Psoas muscle (tissue), 8 donors: ENCODE measurements at regions of chr7 and their contacts with region 1.

Region 1: DNA sequence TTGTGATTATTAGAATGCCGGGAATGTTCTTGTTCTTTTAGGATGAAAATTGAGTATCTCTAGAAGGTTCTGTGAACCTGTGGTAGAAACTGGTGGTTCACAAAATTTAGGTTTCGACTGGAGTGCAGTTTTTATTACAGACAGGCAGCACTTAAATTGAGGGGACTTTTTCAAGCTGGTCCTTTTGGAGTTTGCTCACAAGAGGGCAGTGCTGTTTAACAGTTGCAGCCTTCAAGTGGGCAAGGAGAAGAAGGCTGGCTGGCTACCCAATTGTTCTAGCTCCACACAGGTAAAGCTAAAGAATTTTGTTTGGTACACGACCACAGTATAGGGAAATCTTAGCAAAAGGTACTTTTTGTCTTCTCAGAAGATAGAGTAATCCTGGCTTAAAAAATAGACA is 233.6 kb downstream of the SNX13 start:
- DNase-seq: no peak
- ATAC-seq: peak in 3 of 4 donors; percentile 58 to 62 (median 59)
- H3K4me3 ChIP-seq: no peak overlapping the region
- H3K27ac ChIP-seq: no peak overlapping the region
- H3K4me1 ChIP-seq: no peaks in the 10 kb centered on the region
- H3K27me3 ChIP-seq: no peaks in the 10 kb centered on the region
- CTCF ChIP-seq: peak; percentile 55

Region 2: DNA sequence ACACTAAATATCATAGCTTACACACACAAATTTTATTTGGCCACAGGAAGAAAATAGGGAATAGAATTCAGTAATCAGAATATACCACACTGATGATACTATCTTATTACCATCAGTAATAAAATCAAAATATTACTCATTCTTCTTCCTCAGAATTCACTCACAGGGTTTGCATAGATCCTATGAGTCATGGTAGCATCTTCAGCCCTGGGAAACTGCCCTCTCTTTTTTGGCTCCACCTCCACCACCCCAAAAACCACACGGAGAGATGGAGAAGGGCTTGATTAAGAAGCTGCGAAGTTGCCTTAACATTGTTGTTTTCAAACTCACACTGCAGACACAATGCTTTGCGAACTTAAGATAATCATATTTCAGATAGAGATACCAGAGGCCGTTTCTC is 562.4 kb before region 1 on chr7:
- intact Hi-C with region 1: no loop called
- DNase-seq: no peak
- ATAC-seq: no peak
- H3K4me3 ChIP-seq: no peak overlapping the region
- H3K27ac ChIP-seq: no peak overlapping the region
- H3K4me1 ChIP-seq: peaks cover 3% of the 10 kb centered on the region
- H3K27me3 ChIP-seq: no peaks in the 10 kb centered on the region
- CTCF ChIP-seq: no peak

Region 3: DNA sequence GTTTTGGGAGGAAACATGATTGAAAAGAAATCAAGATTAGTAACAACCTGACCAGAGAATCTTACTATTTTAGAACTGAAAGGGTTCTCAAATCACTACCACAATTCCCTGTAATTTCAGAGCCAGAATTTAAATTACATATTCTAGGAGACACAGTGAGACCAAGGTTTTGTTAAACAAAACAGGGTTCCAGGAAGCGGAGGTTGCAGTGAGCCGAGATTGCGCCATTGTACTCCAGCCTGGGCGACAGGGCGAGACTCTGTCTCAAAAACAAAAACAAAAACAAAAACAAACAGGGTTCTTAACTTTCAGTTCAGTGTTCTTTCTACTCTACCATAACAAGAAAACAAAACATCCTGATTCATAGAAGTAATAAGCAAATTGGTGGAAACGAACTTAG is 176.0 kb after region 1 on chr7:
- intact Hi-C with region 1: no loop called
- DNase-seq: no peak
- ATAC-seq: no peak
- H3K4me3 ChIP-seq: no peak overlapping the region
- H3K27ac ChIP-seq: no peak overlapping the region
- H3K4me1 ChIP-seq: no peaks in the 10 kb centered on the region
- H3K27me3 ChIP-seq: no peaks in the 10 kb centered on the region
- CTCF ChIP-seq: no peak

Region 4: GRCh38 chr7:18666107-18666728 is 959.5 kb after region 1 on chr7:
- intact Hi-C with region 1: loop called in 1 of 2 experiments (anchors 10 kb)
- DNase-seq: peak; percentile 76 to 83
- ATAC-seq: peak; percentile 79 to 97 (median 94)
- H3K4me3 ChIP-seq: no peak overlapping the region
- H3K27ac ChIP-seq: no peak overlapping the region
- H3K4me1 ChIP-seq: no peaks in the 10 kb centered on the region
- H3K27me3 ChIP-seq: no peaks in the 10 kb centered on the region
- CTCF ChIP-seq: peak; percentile 90